ENCODE measurements at regions of chr20 and their contacts with region 1.

Region 1: GRCh38 chr20:31605031-31605901 is at the start of gene ID1:
- DNase-seq: peak; percentile 99
- ATAC-seq: peak; percentile 58
- H3K4me3 ChIP-seq: peak within 1 kb of the TSS; percentile 81 to 99 (median 95)
- H3K27ac ChIP-seq: peak within 1 kb of the TSS; percentile 98
- H3K4me1 ChIP-seq: peaks cover 53% of the 10 kb centered on the region
- H3K27me3 ChIP-seq: no peaks in the 10 kb centered on the region; a peak in 1 of 5 replicates
- CTCF ChIP-seq: peak; percentile 8; the same call in 1 of the 2 replicates
- EP300 ChIP-seq: peak in 1 of 2 experiments; percentile 59; a peak in 2 of 4 replicates
- POLR2A ChIP-seq: peak in 1 of 2 experiments; percentile 100; a peak in 2 of 4 replicates
- RAD21 ChIP-seq: peak; percentile 60
- total RNA-seq, gene ID1: 315 and 419 TPM in 2 replicates

Region 2: DNA sequence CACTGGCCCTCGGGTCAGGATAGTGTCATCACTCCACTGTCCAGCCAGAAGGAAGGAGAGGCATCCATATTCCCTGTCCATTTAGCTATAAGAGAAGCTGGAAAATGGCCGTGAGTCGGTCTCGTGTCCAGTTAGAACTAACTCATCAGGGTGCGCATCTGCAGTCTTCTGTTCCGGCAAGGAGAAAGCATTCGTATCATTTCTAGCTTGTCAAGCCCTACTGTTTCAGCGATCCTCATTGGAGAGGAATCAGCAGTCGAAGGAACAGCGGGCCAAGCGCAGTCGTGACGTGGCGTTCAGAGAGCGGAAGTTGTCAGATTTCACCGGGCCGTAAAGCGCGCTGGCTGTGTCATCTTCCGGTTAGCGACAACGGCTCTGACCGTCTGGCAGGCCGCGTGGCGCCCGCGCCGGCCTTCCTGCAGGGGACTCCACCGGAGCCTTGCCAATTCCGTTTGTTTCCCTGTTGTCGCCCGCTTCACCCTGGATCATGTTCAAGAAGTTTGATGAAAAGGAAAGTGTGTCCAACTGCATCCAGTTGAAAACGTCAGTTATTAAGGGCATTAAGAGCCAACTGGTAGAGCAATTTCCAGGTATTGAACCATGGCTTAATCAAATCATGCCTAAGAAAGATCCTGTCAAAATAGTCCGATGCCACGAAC is 58.1 kb before region 1 on chr20:
- CTCF ChIA-PET with region 1: no interaction called
- POLR2A ChIA-PET with region 1: interaction called, 92 read pairs
- in situ Hi-C with region 1: no loop called
- intact Hi-C with region 1: no loop called
- DNase-seq: peak; percentile 88
- ATAC-seq: peak; percentile 79
- H3K4me3 ChIP-seq: peak overlapping the region; percentile 66 to 72 (median 68)
- H3K27ac ChIP-seq: peak overlapping the region; percentile 92
- H3K4me1 ChIP-seq: peaks cover 26% of the 10 kb centered on the region
- H3K27me3 ChIP-seq: no peaks in the 10 kb centered on the region
- CTCF ChIP-seq: peak; percentile 35
- EP300 ChIP-seq: no peak
- POLR2A ChIP-seq: peak; percentile 78 to 89
- RAD21 ChIP-seq: peak; percentile 37; the same call in 1 of the 2 replicates

Region 3: DNA sequence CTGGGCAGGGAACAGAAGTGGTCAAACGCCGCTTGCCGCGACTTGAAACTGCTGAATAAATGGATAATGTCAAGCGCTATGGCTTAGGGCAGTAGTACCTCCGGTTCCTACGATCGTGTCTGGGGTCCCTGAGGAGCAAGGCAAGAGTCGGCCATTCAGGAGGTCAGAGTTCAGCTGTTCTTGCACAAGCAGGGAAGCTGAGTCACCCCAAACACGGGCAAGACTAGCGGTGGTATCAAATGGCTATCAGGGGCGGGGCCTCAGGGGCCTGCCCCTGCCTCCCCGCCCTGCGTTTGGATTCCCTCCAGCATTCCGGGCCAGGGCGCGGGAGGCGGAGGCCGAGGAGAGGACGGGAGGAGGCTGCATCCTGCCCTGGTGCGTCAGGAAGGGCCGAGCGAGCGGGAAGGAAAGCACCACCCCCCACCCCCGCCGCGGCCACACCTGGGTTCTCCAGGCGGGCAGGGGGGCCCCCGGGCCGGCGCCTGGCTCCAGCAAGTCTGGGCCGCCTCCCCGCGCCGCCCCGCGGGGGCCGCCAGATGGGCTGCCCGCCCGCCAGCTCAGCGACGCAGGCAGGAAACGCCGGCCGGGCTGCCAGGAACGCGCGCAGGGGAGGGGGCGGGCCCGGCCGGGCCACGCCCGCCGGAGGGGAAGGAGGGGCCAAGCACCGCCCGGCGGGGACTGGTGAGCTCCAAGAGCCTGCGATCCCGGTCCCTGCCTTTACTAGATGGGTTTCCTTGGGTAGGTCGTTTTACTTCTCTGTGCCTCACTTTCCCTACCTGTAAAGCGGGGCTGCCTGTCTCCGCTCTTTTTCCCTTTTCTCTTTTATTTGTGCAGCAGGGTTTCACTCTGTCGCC is 32.3 kb before region 1 on chr20:
- CTCF ChIA-PET with region 1: interaction called, 335 read pairs
- POLR2A ChIA-PET with region 1: interaction called, 1,427 read pairs
- in situ Hi-C with region 1: no loop called
- intact Hi-C with region 1: no loop called
- DNase-seq: peak; percentile 100
- ATAC-seq: peak; percentile 74
- H3K4me3 ChIP-seq: peak overlapping the region; percentile 70 to 88 (median 80)
- H3K27ac ChIP-seq: peak overlapping the region; percentile 86
- H3K4me1 ChIP-seq: peaks cover 68% of the 10 kb centered on the region
- H3K27me3 ChIP-seq: no peaks in the 10 kb centered on the region; a peak in 1 of 5 replicates
- CTCF ChIP-seq: no peak; the same call in 1 of the 2 replicates
- EP300 ChIP-seq: peak; percentile 89 to 96; a peak in 3 of 4 replicates
- POLR2A ChIP-seq: peak; percentile 80 to 89
- RAD21 ChIP-seq: peak; percentile 97

Region 4: DNA sequence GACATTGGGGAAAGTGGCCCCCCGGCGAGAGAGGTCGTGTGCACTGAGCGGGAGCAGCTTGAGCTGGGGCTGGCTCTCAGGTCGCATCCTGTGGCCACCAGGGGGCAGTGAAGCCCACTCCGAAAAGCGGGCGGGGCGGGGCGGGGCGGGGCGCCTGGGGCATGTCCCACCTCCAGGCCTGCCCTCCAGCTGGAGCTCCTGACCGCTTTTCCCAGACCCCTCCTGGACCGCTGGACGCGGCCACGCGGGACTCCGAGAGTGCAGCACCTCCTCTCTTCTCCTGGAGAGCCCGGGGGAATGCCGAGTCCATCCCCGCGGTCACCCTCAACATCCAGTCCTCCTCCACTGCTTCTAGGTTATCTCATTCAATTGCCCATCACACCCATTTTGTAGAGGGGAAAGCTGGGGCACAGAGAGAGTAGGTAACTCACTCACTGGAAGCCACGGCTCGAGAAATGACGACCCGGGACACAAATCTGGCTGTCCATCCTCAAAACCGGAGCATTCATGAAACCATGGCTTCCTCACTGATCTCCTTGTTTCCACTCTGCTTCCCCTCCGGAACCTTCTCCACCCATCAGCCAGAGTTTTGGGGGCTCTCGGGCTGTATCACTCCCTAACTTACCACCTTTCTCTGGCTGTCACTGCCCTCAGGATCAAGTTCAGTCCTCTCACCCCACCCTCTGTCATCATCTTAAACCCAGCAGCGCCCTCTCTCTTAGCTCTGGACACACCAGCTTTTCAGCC is 56.5 kb after region 1 on chr20:
- CTCF ChIA-PET with region 1: no interaction called
- POLR2A ChIA-PET with region 1: interaction called, 23 read pairs
- in situ Hi-C with region 1: no loop called
- intact Hi-C with region 1: no loop called
- DNase-seq: peak; percentile 76
- ATAC-seq: peak; percentile 36
- H3K4me3 ChIP-seq: peak overlapping the region; percentile 20 to 66 (median 40)
- H3K27ac ChIP-seq: peak overlapping the region; percentile 41
- H3K4me1 ChIP-seq: peaks cover 64% of the 10 kb centered on the region
- H3K27me3 ChIP-seq: no peaks in the 10 kb centered on the region
- CTCF ChIP-seq: peak; percentile 91
- EP300 ChIP-seq: no peak
- POLR2A ChIP-seq: peak; percentile 56 to 87; a peak in 3 of 4 replicates
- RAD21 ChIP-seq: peak; percentile 91; the same call in 1 of the 2 replicates

Region 5: GRCh38 chr20:31704225-31705119 is 99.2 kb after region 1 on chr20:
- CTCF ChIA-PET with region 1: no interaction called
- POLR2A ChIA-PET with region 1: interaction called, 38 read pairs
- in situ Hi-C with region 1: no loop called
- intact Hi-C with region 1: no loop called
- DNase-seq: peak; percentile 100
- ATAC-seq: peak; percentile 88
- H3K4me3 ChIP-seq: peak overlapping the region in 1 of 3 experiments; percentile 38; a peak in 1 of 6 replicates
- H3K27ac ChIP-seq: peak overlapping the region; percentile 87
- H3K4me1 ChIP-seq: peaks cover 99% of the 10 kb centered on the region
- H3K27me3 ChIP-seq: no peaks in the 10 kb centered on the region
- CTCF ChIP-seq: no peak
- EP300 ChIP-seq: peak; percentile 99 to 100
- POLR2A ChIP-seq: peak; percentile 56 to 73; a peak in 3 of 4 replicates
- RAD21 ChIP-seq: peak; percentile 43

Region 6: DNA sequence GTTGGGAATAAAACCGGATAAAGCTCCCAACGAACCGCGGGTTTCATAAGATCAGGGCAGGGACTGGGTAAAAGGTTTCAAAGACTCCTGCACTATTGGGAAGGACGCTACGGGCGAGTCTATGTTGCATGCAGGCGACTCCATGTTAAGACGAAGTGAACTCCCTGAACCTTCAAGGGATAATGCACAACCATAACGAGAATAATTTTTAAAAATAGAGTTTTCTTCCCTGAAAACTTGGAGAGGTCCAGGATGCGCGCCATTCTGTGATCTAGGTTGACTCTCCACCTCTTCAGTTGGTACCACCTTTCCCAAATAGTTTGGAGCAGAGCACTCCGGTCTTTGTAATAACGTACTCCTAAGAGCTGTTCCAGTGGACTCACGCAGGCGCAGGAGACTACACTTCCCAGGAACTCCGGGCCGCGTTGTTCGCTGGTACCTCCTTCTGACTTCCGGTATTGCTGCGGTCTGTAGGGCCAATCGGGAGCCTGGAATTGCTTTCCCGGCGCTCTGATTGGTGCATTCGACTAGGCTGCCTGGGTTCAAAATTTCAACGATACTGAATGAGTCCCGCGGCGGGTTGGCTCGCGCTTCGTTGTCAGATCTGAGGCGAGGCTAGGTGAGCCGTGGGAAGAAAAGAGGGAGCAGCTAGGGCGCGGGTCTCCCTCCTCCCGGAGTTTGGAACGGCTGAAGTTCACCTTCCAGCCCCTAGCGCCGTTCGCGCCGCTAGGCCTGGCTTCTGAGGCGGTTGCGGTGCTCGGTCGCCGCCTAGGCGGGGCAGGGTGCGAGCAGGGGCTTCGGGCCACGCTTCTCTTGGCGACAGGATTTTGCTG is 133.7 kb after region 1 on chr20 and contains the start of gene TPX2:
- CTCF ChIA-PET with region 1: no interaction called
- POLR2A ChIA-PET with region 1: interaction called, 15 read pairs
- in situ Hi-C with region 1: no loop called
- intact Hi-C with region 1: no loop called
- DNase-seq: peak; percentile 99
- ATAC-seq: peak; percentile 99
- H3K4me3 ChIP-seq: peak within 1 kb of the TSS; percentile 90 to 97 (median 93)
- H3K27ac ChIP-seq: peak within 1 kb of the TSS; percentile 84
- H3K4me1 ChIP-seq: peaks cover 34% of the 10 kb centered on the region
- H3K27me3 ChIP-seq: peaks cover 0 to 3% of the 10 kb centered on the region in 2 experiments; a peak in 2 of 5 replicates
- CTCF ChIP-seq: peak; percentile 68
- EP300 ChIP-seq: no peak; a peak in 1 of 4 replicates
- POLR2A ChIP-seq: peak; percentile 87 to 95
- RAD21 ChIP-seq: peak; percentile 76
- total RNA-seq, gene TPX2: 124 and 190 TPM in 2 replicates

Measured in HepG2 (cell line).